ENCODE measurements at regions of chr19 and their contacts with region 1.

Region 1: GRCh38 chr19:933216-933882 is 7.5 kb downstream of the ARID3A start:
- DNase-seq: no peak
- ATAC-seq: no peak
- H3K4me3 Mint-ChIP-seq: peak overlapping the region; percentile 72
- H3K27ac Mint-ChIP-seq: peak overlapping the region; percentile 79
- H3K4me1 Mint-ChIP-seq: peaks cover 46% of the 10 kb centered on the region
- H3K27me3 Mint-ChIP-seq: no peaks in the 10 kb centered on the region
- CTCF ChIP-seq: no peak

Region 2: DNA sequence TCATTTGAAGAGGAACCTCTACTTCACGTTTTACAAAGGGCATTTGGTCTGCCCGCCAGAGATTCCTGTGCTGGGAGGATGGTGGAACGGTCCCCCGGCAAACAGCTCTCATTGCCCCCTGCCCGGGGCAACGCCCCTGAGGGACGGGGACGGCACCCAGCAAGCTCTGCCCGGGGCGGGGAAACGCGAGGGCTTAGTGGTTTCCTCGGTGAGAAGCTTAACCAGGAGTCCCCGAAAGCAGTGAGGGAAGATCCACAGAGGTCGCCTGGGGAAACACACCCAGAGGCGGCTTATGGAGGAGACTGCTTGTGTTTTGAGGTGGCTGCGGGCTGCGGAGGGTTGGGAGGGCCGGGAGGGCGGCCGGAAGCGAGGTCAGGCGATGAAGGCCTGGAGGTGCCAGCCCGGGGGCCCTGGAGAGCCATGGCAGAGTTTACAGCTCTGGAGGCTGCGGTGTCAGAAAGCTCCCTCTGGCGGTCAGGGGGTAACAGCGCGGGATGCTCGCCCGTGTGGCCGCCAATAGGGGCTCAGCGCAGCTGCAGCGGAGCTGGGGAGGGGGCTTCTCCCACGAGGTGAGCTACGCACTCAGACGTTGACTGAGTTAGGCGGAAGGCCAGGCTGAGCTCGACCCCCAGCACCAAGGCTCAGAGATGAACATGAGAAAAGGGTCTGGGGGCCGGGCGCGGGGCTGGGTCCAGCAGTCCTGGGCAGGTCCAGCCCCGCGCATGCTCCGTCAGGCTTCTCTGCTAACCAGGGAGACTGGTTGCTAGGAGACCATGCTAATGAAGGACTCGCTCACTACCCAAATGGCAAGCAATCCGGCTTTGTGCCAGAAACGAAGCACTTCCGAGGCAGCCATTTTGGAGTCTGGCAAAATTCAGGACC is 426.7 kb before region 1 on chr19:
- CTCF ChIA-PET with region 1: no interaction called
- POLR2A ChIA-PET with region 1: no interaction called
- intact Hi-C with region 1: no loop called
- DNase-seq: peak; percentile 91
- ATAC-seq: peak; percentile 70
- H3K4me3 Mint-ChIP-seq: peak overlapping the region; percentile 95
- H3K27ac Mint-ChIP-seq: peak overlapping the region; percentile 100
- H3K4me1 Mint-ChIP-seq: peaks cover 44% of the 10 kb centered on the region
- H3K27me3 Mint-ChIP-seq: no peaks in the 10 kb centered on the region
- CTCF ChIP-seq: peak; percentile 70

Region 3: DNA sequence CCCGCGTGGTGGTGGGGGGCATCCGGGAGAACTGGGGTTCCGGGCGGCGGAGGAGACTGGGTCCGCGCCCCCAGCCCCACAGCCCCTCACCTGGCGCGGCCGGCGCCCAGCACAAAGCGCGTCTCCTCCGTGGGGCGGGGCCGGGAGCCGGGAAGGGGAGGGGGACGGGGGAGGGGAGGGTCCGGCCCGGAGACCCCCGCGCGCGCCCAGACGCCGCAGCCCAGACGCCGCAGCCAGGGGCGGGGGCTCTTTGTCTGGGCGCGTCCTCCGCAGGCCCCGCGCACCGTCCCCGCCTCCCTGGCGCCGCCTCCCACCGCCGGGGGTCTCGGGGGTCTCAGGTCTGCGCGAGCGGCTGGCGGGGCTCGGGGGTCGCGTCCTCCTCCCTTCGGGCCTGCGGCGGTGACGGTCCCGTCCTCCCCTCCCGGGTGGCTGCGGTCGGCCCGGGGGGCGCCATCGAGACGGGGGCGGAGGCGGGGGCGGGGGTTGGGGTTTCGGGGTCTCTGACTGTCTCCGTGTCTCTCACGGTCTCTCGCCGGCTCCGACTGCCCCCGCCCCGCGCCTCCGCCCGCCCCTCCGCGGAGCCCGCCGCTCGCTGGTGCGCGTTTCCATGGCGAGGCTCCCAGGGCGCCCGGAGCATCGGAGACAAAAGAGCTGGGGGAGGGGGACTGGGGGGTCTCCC is 111.4 kb before region 1 on chr19 and contains the start of gene PLPPR3:
- CTCF ChIA-PET with region 1: no interaction called
- POLR2A ChIA-PET with region 1: no interaction called
- intact Hi-C with region 1: no loop called
- DNase-seq: no peak
- ATAC-seq: no peak
- H3K4me3 Mint-ChIP-seq: no peak within 1 kb of the TSS
- H3K27ac Mint-ChIP-seq: no peak within 1 kb of the TSS
- H3K4me1 Mint-ChIP-seq: no peaks in the 10 kb centered on the region
- H3K27me3 Mint-ChIP-seq: peaks cover 11% of the 10 kb centered on the region
- CTCF ChIP-seq: no peak
- total RNA-seq, gene PLPPR3: not detected in 2 replicates

Region 4: DNA sequence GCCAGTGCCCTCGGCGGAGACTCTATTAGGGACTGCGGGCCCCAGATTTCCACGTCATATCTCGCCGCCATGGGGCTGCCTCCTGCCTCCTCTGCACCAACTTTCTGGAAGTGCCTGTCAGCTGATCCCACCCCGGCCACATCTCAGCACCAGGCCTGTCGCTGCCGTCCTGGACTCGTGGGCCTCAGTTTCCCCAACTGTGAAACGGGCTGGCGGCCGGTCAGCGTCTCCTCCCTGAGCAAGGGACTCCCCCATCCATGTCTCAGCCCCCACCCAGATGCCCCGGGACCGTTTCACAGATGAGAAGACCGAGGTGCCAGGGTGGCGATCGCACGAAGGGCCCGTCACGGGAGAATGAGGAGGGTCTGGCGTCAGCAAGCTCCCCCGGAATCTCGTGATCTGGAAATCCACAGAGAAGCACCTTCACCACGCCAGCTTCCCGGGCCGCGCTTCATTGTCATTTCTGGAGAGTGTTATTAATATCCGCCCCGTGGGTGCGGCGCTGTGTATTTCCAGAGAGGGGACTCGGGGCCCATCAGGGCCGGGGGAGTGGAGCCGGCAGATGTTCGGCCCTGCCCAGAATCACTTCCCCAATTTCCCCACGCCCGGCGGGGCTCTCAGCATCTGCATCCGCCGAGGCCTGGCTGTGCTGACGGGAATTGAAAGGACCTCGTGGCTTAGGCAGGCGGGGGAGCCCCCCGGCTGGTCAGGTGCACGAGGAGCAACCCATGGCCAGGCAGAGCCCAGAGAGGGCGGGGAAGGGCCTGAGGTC is 14.1 kb after region 1 on chr19:
- CTCF ChIA-PET with region 1: no interaction called
- POLR2A ChIA-PET with region 1: interaction called, 45 read pairs
- intact Hi-C with region 1: no loop called
- DNase-seq: peak; percentile 84
- ATAC-seq: peak; percentile 76
- H3K4me3 Mint-ChIP-seq: peak overlapping the region; percentile 81
- H3K27ac Mint-ChIP-seq: peak overlapping the region; percentile 93
- H3K4me1 Mint-ChIP-seq: peaks cover 57% of the 10 kb centered on the region
- H3K27me3 Mint-ChIP-seq: no peaks in the 10 kb centered on the region
- CTCF ChIP-seq: no peak

Region 5: DNA sequence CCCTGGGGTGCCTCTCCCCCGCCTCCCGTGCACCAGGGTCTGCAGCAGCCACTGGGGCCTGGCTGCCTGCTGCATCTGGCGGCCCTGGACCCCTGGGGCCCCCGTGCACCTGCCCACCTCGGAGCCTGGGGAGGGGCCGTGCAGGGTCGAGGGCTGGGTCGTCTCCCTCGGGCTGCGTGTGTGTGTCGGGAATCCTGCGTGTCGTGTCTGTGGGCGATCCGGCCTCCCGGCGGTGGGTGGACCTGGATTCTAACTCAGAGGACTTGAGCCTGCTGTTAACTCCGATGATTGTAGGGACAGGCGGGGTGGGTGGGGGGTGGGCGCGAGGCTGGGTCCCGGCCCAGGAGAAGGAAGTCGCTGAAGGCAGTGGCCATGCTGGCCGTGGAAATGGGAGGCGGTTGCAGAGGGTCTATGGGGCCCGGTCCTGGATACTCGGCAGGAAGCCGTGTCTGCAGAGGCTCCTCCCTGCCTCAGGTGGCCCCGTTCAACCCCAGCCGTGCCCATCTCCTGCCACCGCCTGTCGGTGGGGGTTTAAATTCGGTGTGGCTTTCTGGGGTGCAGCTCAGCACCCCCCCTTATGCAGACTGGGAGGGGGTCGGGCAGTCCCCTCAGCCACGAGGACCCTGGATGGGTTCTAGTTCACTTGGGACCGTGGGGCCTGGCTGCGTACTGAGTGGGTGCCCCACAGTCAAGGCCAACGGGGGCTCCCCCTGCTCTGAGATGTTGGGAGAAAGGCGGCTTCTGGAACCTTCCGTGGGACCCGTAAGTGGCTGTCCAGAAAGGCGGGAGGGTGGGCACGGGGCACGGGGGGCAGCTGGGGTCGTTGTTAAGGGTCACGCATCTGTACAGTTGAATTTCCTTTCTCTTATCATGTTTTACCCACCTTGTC is 41.5 kb after region 1 on chr19:
- CTCF ChIA-PET with region 1: no interaction called
- POLR2A ChIA-PET with region 1: no interaction called
- intact Hi-C with region 1: no loop called
- DNase-seq: no peak
- ATAC-seq: no peak
- H3K4me3 Mint-ChIP-seq: no peak overlapping the region
- H3K27ac Mint-ChIP-seq: no peak overlapping the region
- H3K4me1 Mint-ChIP-seq: peaks cover 2% of the 10 kb centered on the region
- H3K27me3 Mint-ChIP-seq: no peaks in the 10 kb centered on the region
- CTCF ChIP-seq: no peak

Region 6: DNA sequence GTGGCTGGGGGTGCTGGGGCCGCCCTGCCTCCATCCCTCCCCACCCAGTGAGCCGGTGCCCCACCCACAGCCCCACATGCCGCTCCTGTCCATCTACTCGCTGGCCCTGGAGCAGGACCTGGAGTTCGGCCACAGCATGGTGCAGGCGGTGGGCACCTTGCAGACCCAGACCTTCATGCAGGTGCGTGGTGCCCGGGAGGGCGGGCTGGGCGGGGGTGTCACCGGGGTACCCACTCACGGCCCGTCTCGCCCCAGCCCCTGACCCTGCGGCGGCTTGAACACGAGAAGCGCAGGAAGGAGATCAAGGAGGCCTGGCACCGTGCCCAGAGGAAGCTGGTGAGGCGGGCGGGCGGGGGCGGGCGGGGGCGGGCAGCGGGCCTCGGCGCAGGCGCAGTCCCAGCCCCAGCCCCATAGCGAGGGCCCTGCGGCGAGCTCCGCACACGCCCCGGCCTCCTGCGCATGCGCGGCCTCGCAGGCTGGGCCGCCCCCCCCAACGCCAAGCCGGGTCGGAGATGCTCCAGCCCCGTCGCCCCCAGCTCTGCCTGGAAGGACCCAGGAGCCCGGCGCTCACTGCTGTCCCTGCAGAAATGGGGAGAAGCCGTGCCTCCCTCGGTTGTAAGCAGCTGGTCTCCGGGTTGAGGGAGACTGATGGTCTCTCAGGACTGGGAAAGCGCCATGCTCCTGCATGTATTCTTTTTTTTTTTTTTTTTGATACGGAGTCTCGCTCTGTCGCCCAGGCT is 141.4 kb after region 1 on chr19:
- CTCF ChIA-PET with region 1: no interaction called
- POLR2A ChIA-PET with region 1: no interaction called
- intact Hi-C with region 1: no loop called
- DNase-seq: peak; percentile 82
- ATAC-seq: peak; percentile 37
- H3K4me3 Mint-ChIP-seq: peak overlapping the region; percentile 53
- H3K27ac Mint-ChIP-seq: peak overlapping the region; percentile 93
- H3K4me1 Mint-ChIP-seq: peaks cover 62% of the 10 kb centered on the region
- H3K27me3 Mint-ChIP-seq: no peaks in the 10 kb centered on the region
- CTCF ChIP-seq: no peak

Measured in activated B cell treated with CpG ODN at 0.5 μM for 24 hours (primary cell).